H1 (cell line): ENCODE measurements at regions of chr6 and their contacts with region 1.

Region 1: DNA sequence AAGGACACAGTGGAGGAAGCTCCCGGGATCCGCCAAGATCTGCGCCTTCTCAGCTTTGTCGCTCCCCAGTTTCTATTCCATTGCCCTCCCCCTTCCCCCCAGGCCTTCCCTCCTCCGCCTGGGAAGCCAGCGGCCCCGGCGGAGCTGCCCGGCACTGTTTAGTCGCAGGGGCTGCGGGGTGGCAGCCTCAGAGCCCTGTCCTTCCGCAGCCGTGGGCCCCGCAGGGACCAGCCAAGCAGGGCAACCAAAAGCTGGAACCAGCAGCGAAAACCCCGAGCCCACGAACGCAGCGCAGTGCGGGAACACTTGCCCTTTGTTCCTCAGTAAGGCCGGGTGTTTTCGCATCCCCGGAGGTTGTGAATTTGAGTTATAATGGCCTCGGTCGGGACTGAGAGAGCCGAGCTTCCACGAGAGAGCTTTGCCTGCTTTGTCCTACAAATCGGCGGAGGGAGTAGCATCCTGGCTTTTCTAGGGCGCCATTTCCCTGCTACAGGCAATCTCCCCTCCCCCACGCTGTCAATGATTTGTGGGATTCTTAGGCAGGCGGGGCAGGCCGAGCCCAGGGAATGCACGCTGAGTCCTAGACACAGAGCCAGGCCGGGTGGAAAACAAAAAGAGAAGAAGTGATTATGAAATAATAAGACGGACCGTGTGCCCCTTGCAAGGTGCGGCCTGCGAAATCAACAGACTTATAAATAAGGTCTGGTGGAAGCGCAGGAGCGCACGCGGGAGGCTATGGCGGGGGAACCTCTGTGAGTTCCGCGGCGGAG is 4.0 kb upstream of the TUBB2B start:
- DNase-seq: peak in 1 of 2 experiments; percentile 83
- H3K4me3 ChIP-seq: peak overlapping the region; percentile 71 to 99 (median 86)
- H3K27ac ChIP-seq: no peak overlapping the region; the same call in 1 of the 2 replicates
- H3K4me1 ChIP-seq: peaks cover 5 to 17% (median 11%) of the 10 kb centered on the region in 4 experiments; a peak in 6 of 7 replicates
- H3K27me3 ChIP-seq: peaks cover 0 to 23% (median 19%) of the 10 kb centered on the region in 4 experiments; a peak in 6 of 7 replicates
- CTCF ChIP-seq: no peak
- EP300 ChIP-seq: peak in 1 of 2 experiments; percentile 28; a peak in 1 of 3 replicates
- POLR2A ChIP-seq: peak in 1 of 2 experiments; percentile 47; a peak in 1 of 3 replicates
- RAD21 ChIP-seq: no peak

Region 2: DNA sequence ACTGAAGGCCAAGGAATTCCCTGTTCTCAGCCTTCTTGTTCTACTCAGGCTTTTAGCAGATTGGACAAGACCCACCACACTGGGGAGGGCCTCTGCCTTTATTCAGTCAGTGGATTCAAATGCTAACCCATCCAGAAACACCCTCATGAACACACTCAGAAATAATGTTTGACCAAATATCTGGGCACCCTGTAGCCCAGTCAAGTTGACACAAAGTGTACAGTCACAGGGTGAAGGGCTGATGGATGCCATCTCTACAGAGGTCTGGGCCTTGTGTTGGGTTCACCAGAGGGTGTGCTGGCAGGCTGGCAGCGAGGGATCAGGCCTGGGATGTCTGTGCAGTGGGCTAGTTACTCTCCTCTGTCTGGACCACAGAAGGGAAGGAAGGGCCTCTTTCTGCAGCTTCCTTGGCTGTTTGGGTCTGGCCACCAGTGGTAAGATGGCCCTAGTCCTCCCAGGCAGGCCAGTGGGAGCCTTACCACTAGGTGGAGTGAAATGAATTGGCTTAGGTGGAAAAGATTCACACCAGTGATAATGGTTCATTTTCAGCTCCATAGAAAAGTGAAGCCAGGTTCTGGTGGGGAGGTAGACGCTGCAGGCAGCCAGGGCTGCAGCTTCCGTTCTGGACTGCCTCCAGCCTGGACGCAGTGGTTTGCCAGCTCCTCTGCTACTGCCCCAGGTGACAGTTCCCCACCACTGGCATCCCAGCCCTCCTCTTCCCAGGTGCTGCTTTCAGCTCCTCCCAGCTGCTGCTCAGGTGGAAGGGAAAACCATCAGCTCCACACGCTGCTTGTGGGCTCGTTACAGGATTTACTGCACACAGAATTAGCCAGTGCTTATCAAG is 83.3 kb before region 1 on chr6:
- CTCF ChIA-PET with region 1: interaction called, 4 read pairs
- POLR2A ChIA-PET with region 1: interaction called, 23 read pairs
- DNase-seq: no peak
- H3K4me3 ChIP-seq: no peak overlapping the region
- H3K27ac ChIP-seq: no peak overlapping the region
- H3K4me1 ChIP-seq: peaks cover 2 to 7% (median 3%) of the 10 kb centered on the region in 4 experiments; a peak in 6 of 7 replicates
- H3K27me3 ChIP-seq: no peaks in the 10 kb centered on the region
- CTCF ChIP-seq: peak in 2 of 3 experiments; percentile 13 to 26; a peak in 2 of 4 replicates
- EP300 ChIP-seq: no peak
- POLR2A ChIP-seq: no peak
- RAD21 ChIP-seq: peak; percentile 23 to 30; a peak in 3 of 4 replicates

Region 3: DNA sequence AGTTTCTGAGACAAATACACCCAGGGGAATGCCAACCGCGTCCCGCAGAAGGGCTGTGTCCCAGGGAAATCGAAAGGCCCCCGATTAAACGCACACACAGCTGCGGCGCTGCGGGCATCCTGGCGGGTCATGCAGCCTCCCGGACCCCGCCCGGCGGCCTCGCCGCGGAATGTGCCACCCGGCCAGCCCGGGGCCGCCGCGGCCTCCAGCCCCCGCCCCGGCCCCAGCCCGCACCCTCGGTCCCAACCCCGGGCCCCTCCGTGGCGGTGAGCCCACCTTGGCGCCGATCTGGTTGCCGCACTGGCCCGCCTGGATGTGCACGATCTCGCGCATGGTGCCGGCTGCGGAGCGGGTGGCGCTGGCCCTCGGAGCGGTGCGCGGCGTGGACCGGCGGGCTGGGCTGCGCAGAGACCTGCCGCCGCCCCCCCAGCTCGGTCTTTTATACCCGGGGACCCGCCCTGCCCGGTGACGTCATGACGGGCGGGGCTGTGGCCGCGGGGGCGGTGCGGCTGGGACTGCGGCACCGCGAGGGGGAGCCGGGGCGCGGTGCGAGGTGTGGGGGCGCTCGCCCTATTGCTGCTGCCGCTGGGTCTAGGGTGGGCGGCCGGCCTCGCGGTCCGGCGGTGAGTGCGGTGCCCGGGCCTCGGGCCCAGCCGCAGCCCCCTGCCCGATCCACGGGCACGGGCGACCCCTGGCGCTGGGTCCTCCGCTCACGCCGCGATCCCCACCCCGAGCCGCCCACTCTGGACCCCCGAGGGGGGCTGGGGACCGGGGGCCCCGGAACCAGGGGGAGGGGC is 74.1 kb before region 1 on chr6 and contains the start of gene TUBB2A:
- CTCF ChIA-PET with region 1: interaction called, 10 read pairs
- POLR2A ChIA-PET with region 1: interaction called, 58 read pairs
- DNase-seq: peak in 1 of 2 experiments; percentile 90
- H3K4me3 ChIP-seq: peak within 1 kb of the TSS; percentile 60 to 79 (median 74)
- H3K27ac ChIP-seq: peak within 1 kb of the TSS; percentile 24; the same call in 1 of the 2 replicates
- H3K4me1 ChIP-seq: peaks cover 0 to 20% (median 9%) of the 10 kb centered on the region in 4 experiments; a peak in 5 of 7 replicates
- H3K27me3 ChIP-seq: no peaks in the 10 kb centered on the region
- CTCF ChIP-seq: peak; percentile 30 to 61 (median 45)
- EP300 ChIP-seq: peak in 1 of 2 experiments; percentile 43; a peak in 1 of 3 replicates
- POLR2A ChIP-seq: peak; percentile 67 to 78
- RAD21 ChIP-seq: peak; percentile 1 to 34; a peak in 1 of 4 replicates
- total RNA-seq, gene TUBB2A: 330 and 349 TPM in 2 replicates

Region 4: DNA sequence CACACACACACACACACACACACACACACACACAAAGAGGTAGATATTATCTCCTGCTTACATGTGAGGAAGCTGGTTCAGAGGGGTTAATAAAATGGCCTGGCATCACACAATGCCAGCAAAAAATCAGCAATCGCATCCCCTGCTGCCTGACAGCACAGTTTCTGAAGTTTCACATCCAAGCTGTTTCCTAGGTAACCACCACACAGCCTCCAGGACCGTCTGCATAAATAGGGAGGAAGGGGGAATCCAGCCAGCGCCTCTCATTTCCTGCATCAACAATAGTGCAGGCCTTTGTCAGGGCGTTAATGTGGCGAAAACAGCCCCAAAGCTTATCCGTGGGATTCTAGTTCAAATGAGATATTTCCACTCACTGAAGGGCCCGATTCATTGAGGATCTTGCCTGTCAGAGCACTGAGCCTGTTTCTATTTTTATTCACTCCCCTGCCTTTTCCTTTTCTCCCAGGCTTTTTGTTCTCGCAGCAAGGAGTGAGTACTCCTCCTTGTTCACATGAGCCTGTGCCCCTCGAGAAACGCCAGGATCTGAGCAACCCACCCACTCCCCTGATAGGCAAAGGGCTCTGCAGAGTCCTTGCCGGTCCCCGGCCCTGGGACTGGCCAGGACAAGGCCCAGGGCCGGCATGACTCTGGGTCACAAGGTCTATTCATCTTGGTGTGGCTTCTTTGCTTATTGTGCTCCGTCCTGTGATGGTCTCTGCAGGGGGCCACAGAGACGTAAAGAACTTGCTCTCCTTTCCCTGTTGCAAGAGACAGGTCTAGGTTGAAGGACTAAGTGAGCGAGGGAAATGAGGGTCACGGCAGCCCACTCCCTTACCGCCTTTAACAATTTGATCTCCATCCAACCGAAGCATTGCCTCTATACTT is 36.7 kb before region 1 on chr6:
- CTCF ChIA-PET with region 1: interaction called, 6 read pairs
- POLR2A ChIA-PET with region 1: interaction called, 32 read pairs
- DNase-seq: peak in 1 of 2 experiments; percentile 62
- H3K4me3 ChIP-seq: peak overlapping the region in 1 of 4 experiments; percentile 28; a peak in 1 of 8 replicates
- H3K27ac ChIP-seq: peak overlapping the region; percentile 68
- H3K4me1 ChIP-seq: peaks cover 15 to 24% (median 20%) of the 10 kb centered on the region in 4 experiments
- H3K27me3 ChIP-seq: no peaks in the 10 kb centered on the region
- CTCF ChIP-seq: no peak
- EP300 ChIP-seq: no peak
- POLR2A ChIP-seq: no peak
- RAD21 ChIP-seq: no peak

Region 5: DNA sequence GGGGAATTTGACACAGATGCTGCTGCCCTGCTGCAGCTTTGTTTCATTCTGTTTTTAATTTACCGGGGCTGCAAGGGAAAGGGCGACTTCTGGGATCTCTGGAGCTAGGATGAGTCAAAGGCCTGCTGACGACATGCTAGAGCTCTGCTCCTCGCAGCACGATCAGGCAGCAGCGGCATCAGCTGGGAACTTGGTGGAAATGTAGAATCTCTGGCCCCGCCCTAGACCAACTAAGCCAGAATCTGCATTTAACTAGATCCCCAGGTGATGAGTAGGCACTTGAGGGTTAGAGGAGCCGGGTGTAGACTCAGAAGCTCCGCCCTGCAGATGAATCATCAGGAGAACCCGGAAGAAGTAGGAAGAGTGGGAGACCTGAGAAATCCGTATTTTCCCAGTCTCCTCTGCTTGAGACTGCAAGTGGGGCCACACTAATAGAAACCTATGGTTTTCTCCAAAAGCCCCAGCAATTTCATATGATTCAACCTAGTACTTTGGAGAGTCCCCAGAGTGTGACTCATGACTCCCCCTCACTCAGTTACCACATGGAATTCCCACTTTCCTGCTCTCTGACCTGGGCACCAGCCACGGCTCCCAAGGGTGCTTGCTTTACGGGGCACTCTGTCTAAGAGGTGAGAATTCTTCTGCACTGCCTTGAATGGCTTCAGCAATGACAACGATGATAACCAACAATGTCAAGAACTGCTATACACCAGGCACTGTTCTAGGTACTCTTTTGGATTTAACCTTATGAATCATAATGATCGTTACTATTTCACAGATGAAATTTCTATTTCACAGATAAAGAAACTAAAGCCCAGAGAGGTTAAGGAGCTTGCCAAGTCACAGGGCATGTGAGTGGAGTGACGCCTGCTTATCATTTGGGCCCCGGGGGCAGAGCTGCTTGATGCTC is 22.1 kb before region 1 on chr6:
- CTCF ChIA-PET with region 1: interaction called, 7 read pairs
- POLR2A ChIA-PET with region 1: interaction called, 40 read pairs
- DNase-seq: peak; percentile 69 to 87
- H3K4me3 ChIP-seq: peak overlapping the region in 1 of 4 experiments; percentile 39; a peak in 2 of 8 replicates
- H3K27ac ChIP-seq: 0 out of 2 replicates have a peak overlapping the region, but pooled peaks have one; percentile 9
- H3K4me1 ChIP-seq: peaks cover 3 to 10% (median 4%) of the 10 kb centered on the region in 4 experiments; a peak in 6 of 7 replicates
- H3K27me3 ChIP-seq: no peaks in the 10 kb centered on the region
- CTCF ChIP-seq: peak in 2 of 3 experiments; percentile 19 to 24; a peak in 2 of 4 replicates
- EP300 ChIP-seq: no peak
- POLR2A ChIP-seq: peak; percentile 38 to 62; a peak in 2 of 3 replicates
- RAD21 ChIP-seq: peak; percentile 46 to 58; a peak in 3 of 4 replicates